Panc1 (cell line): ENCODE measurements at regions of chr17 and their contacts with region 1.

Region 1: DNA sequence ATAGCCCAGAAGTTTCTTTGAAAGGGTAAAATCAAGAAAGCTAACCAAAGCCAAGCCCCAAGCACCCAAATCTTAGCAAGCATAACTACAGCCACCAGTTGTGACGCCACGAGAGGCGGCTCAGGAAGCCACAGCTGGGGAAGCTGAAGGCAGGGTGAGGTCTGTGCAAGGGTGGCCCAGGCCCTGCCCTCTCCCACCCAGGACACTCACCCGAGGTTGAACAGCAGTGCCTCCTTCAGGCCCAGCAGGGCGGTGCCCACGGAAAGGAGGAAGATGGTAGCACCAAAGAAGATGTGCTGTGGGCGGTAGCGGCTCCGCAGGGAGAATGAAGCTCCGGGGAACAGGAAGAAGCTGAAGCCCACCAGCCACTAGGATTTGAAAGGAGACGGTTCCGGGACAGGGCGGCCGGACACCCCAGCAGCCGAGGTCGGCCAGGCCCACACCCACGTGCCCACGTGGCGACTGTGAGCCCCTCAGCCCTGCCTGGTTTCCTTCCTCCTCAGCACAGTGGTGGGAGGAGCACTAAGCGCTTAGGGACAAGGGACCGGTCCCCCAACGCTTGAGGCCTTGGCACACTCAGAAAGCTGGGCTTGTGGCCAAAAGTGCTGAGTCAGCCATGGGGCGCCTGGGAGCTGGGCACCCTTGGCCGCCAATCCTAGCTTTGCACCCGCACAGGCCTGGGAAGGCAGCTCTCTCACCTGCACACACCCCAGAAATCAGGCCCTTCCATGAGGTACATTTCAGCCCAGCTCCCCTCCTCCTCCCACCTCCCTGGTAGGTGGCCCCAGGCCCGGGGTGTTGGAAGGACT is 11.0 kb downstream of the CYB561 start:
- DNase-seq: no peak
- ATAC-seq: peak; percentile 72
- H3K4me3 ChIP-seq: peak overlapping the region in 1 of 2 experiments; percentile 7; a peak in 1 of 4 replicates
- H3K27ac ChIP-seq: peak overlapping the region; percentile 83
- H3K4me1 ChIP-seq: peaks cover 75% of the 10 kb centered on the region
- H3K27me3 ChIP-seq: no peaks in the 10 kb centered on the region
- CTCF ChIP-seq: peak; percentile 64

Region 2: GRCh38 chr17:63445979-63446691 is 11.1 kb after region 1 on chr17 and contains the start of gene CYB561:
- CTCF ChIA-PET with region 1: interaction called, 3 read pairs
- POLR2A ChIA-PET with region 1: interaction called, 11 read pairs
- in situ Hi-C with region 1: no loop called
- intact Hi-C with region 1: no loop called
- DNase-seq: no peak
- ATAC-seq: peak; percentile 95
- H3K4me3 ChIP-seq: peak within 1 kb of the TSS; percentile 53 to 71
- H3K27ac ChIP-seq: peak within 1 kb of the TSS; percentile 79
- H3K4me1 ChIP-seq: peaks cover 27% of the 10 kb centered on the region
- H3K27me3 ChIP-seq: no peaks in the 10 kb centered on the region
- CTCF ChIP-seq: peak; percentile 85; the same call in 1 of the 2 replicates
- total RNA-seq, gene CYB561: 40.1 TPM

Region 3: GRCh38 chr17:63621766-63622519 is 186.9 kb after region 1 on chr17 and contains the start of gene MAP3K3:
- CTCF ChIA-PET with region 1: no interaction called
- POLR2A ChIA-PET with region 1: interaction called, 10 read pairs
- in situ Hi-C with region 1: no loop called
- intact Hi-C with region 1: no loop called
- DNase-seq: peak; percentile 96
- ATAC-seq: peak; percentile 94
- H3K4me3 ChIP-seq: peak within 1 kb of the TSS; percentile 70 to 76
- H3K27ac ChIP-seq: peak within 1 kb of the TSS; percentile 77
- H3K4me1 ChIP-seq: peaks cover 22% of the 10 kb centered on the region
- H3K27me3 ChIP-seq: no peaks in the 10 kb centered on the region
- CTCF ChIP-seq: no peak
- total RNA-seq, gene MAP3K3: 22.3 TPM